Transverse colon (tissue), 4 donors: ENCODE measurements at regions of chr3 and their contacts with region 1.

Region 1: DNA sequence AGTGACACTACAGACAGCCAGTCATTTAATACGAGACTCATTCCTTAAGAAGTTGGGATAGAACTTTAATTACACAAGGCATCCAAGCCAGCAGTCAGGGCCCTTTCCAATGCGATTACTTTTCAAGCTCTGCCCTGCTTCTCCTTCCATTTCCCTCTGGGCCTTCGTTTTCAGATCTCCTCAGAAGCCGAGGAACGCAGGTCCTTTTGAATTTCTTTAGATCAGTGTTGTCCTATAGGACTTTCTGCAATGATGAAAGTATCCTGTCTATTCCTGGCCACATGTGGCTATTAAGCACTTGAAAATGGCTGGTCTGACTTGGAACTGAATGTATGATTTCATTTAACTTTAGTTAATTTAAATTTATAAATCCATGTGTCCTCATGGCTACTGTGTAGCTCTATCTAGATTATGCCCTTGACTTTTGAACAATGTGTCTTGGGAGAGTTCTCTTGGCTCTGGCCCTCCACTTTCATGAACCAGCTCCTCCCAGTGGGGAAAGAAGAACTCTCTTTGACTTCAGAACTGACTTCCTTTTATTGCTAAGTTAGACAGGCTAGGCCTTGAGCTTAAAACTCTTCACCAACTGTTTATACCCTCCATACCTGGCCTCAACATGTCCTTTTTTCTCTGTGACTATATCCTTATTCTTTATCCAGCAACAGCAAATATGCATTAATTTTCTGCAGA is 22.6 kb downstream of the TGFBR2 start:
- DNase-seq: no peak
- H3K4me3 ChIP-seq: no peak overlapping the region
- H3K27ac ChIP-seq: peak overlapping the region; percentile 57 to 77 (median 71)
- H3K4me1 ChIP-seq: peaks cover 40 to 99% (median 62%) of the 10 kb centered on the region in 4 donors
- H3K27me3 ChIP-seq: no peaks in the 10 kb centered on the region
- CTCF ChIP-seq: peak in 4 of 5 experiments; percentile 6 to 32 (median 18)
- EP300 ChIP-seq: no peak
- POLR2A ChIP-seq: no peak

Region 2: GRCh38 chr3:30672959-30673358 is 43.9 kb after region 1 on chr3:
- in situ Hi-C with region 1: loop called in 1 of 4 experiments (anchors 10 kb)
- intact Hi-C with region 1: no loop called
- DNase-seq: no peak
- H3K4me3 ChIP-seq: no peak overlapping the region
- H3K27ac ChIP-seq: no peak overlapping the region
- H3K4me1 ChIP-seq: peaks cover 0 to 26% (median 18%) of the 10 kb centered on the region in 4 donors
- H3K27me3 ChIP-seq: no peaks in the 10 kb centered on the region
- CTCF ChIP-seq: no peak
- EP300 ChIP-seq: no peak
- POLR2A ChIP-seq: no peak